ENCODE measurements at regions of chr20 and their contacts with region 1.

Region 1: GRCh38 chr20:10673988-10674711 is at the start of gene JAG1:
- ATAC-seq: peak; percentile 54 to 85 (median 78)
- H3K4me3 ChIP-seq: peak within 1 kb of the TSS; percentile 38 to 66 (median 55)
- H3K27ac ChIP-seq: peak within 1 kb of the TSS; percentile 42 to 85
- H3K4me1 ChIP-seq: peaks cover 16 to 20% of the 10 kb centered on the region in 2 donors
- total RNA-seq, gene JAG1: 15.3 to 93.4 (median 27.9) TPM

Region 2: GRCh38 chr20:10553326-10553984 is 120.7 kb before region 1 on chr20:
- in situ Hi-C with region 1: loop called in 1 of 9 experiments (anchors 25 kb)
- ATAC-seq: peak in 7 of 8 experiments; percentile 46 to 80 (median 71)
- H3K4me3 ChIP-seq: no peak overlapping the region
- H3K27ac ChIP-seq: no peak overlapping the region
- H3K4me1 ChIP-seq: peaks cover 0 to 10% of the 10 kb centered on the region in 2 donors

Region 3: DNA sequence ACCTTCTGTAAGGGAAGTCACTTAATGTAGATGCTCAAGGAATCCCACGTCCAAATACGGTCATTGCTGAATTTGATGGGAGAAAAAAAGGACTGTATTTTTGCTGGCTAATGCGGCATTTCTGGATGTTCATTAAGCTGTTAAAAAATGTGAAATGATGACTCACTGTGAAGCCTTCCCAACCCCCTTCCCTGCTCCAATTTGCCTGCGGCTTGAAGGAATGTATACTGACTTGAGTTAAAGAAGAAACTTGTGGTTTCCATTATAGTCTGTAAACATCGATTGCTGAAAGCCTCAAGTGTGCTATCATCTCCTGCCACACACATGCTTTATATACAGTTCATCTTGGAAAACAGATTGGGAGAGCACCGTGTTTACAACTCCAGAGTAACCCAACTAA is 248.8 kb after region 1 on chr20:
- in situ Hi-C with region 1: loop called in 1 of 9 experiments (anchors 25 kb)
- ATAC-seq: peak in 4 of 8 experiments; percentile 2 to 37 (median 13)
- H3K4me3 ChIP-seq: no peak overlapping the region
- H3K27ac ChIP-seq: no peak overlapping the region
- H3K4me1 ChIP-seq: no peaks in the 10 kb centered on the region

Region 4: GRCh38 chr20:11274141-11274594 is 600.0 kb after region 1 on chr20:
- in situ Hi-C with region 1: loop called in 2 of 9 experiments (anchors 25 kb)
- ATAC-seq: peak; percentile 84 to 98 (median 91)
- H3K4me3 ChIP-seq: no peak overlapping the region
- H3K27ac ChIP-seq: no peak overlapping the region
- H3K4me1 ChIP-seq: peaks cover 4 to 29% of the 10 kb centered on the region in 2 donors

Region 5: GRCh38 chr20:12255461-12255970 is 1581.4 kb after region 1 on chr20:
- in situ Hi-C with region 1: no loop called
- ATAC-seq: no peak
- H3K4me3 ChIP-seq: no peak overlapping the region
- H3K27ac ChIP-seq: no peak overlapping the region
- H3K4me1 ChIP-seq: no peaks in the 10 kb centered on the region

Measured in motor neuron (in vitro differentiated cells).